Activated T-helper 1 cell treated with anti-CD3 and anti-CD28 coated beads, Interleukin-12 subunit alpha, Interleukin-12 subunit beta, Interleukin-2, Interleukin-4 antibody, amounts not matched to agents 30 ng/mL and 10 ng/mL and 1 ng/mL, durations not matched to agents 14 hours and 24 hours and 36 hours (primary cell): ENCODE measurements at regions of chr1 and their contacts with region 1.

Region 1: GRCh38 chr1:183483200-183483599 is 10.9 kb downstream of the SMG7 start:
- DNase-seq: no peak
- H3K4me3 Mint-ChIP-seq: no peak overlapping the region
- H3K27ac Mint-ChIP-seq: no peak overlapping the region
- H3K4me1 Mint-ChIP-seq: peaks cover 72% of the 10 kb centered on the region
- H3K27me3 Mint-ChIP-seq: no peaks in the 10 kb centered on the region

Region 2: GRCh38 chr1:183281553-183282091 is 201.6 kb before region 1 on chr1:
- intact Hi-C with region 1: no loop called
- DNase-seq: peak; percentile 50
- H3K4me3 Mint-ChIP-seq: no peak overlapping the region
- H3K27ac Mint-ChIP-seq: no peak overlapping the region
- H3K4me1 Mint-ChIP-seq: peaks cover 6% of the 10 kb centered on the region
- H3K27me3 Mint-ChIP-seq: peaks cover 5% of the 10 kb centered on the region

Region 3: DNA sequence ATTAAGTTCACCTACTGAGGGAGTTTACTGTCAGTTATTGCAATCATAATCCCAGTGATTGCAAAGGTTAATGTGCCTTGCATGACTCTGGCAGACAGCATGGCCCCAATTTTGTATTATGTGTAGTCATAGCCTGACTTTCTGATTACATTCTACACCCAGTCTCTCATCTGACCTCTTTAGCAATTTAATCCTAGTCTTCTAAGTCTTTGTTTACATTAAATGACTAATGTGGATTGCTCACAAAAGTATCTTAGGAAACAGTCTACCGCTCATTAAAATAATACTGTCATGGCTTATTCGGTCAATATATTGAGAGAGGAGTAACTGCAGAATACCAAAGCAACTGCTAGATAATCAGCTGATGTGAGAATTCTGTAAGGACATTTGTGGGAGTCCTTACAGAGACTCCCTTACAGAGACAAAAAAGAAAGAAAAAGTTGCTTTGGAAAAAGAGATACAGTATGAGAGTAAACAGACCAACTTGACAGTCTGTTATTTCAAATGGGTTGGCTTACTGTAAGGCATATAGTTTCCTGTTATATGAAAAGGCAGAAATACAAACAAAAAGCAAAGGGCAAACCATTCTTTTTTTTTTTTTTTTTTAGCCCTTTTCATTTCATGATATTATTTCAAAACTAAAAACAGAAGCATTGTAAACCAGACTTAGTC is 32.0 kb after region 1 on chr1:
- intact Hi-C with region 1: loop called (anchors 2 kb)
- DNase-seq: no peak
- H3K4me3 Mint-ChIP-seq: no peak overlapping the region
- H3K27ac Mint-ChIP-seq: peak overlapping the region; percentile 52
- H3K4me1 Mint-ChIP-seq: peaks cover 40% of the 10 kb centered on the region
- H3K27me3 Mint-ChIP-seq: no peaks in the 10 kb centered on the region